ENCODE measurements at regions of chr21 and their contacts with region 1.

Region 1: DNA sequence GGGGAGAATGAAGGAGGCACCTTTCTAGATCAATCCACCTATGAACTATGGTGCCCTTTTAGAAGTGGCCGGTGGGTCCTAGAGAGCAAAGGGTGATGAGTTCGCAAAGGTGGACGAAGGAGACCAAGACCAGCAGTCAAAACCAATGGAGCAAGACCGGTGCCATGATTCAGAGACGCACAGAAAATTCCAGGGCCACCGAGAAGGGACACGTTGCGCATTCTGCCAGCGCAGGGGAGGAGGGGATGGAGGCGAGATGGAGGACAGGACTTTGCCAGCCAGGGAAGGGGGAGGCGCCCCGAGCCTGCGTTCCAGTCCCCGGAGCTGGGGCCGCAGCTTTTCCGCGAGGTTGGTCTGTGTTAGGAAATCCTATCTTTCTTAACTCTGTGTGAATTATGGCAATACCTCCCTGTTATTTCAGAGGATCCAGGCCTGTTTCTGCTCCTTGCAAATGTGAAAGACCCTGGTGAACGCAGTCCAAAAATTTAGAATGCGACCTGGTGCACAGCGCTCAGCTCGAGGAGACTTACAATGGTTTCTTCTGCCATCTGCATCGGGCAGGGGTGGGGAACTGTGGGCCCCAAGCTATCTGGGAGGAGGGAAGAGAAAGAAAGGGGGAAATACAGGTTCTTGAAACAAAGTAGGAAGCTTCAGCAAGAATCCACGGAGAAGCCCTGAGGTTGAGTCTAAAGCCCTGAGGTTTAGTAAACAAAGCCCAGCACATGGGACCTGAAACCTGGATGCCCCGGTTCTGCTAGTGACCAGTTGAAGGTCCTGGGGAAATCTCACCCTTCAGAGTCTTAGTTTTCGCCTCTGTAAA is 129.4 kb downstream of the MRPS6 start:
- DNase-seq: peak in 3 of 14 experiments; percentile 7 to 33 (median 32)
- ATAC-seq: peak; percentile 21
- H3K4me3 ChIP-seq: peak overlapping the region; percentile 54
- H3K4me3 Mint-ChIP-seq: peak overlapping the region; percentile 84
- H3K27ac ChIP-seq: no peak overlapping the region
- H3K27ac Mint-ChIP-seq: peak overlapping the region; percentile 48
- H3K4me1 ChIP-seq: peaks cover 49% of the 10 kb centered on the region
- H3K4me1 Mint-ChIP-seq: peaks cover 52% of the 10 kb centered on the region
- H3K27me3 ChIP-seq: no peaks in the 10 kb centered on the region
- H3K27me3 Mint-ChIP-seq: no peaks in the 10 kb centered on the region
- CTCF ChIP-seq: no peak

Region 2: GRCh38 chr21:34078915-34079314 is 123.8 kb before region 1 on chr21:
- CTCF ChIA-PET with region 1: interaction called, 6 read pairs
- POLR2A ChIA-PET with region 1: interaction called, 5 read pairs
- intact Hi-C with region 1: loop called (anchors 5 kb)
- DNase-seq: peak in 5 of 14 experiments; percentile 10 to 61 (median 39)
- ATAC-seq: peak; percentile 30
- H3K4me3 ChIP-seq: no peak overlapping the region
- H3K4me3 Mint-ChIP-seq: peak overlapping the region; percentile 60
- H3K27ac ChIP-seq: no peak overlapping the region
- H3K27ac Mint-ChIP-seq: peak overlapping the region; percentile 48
- H3K4me1 ChIP-seq: peaks cover 43% of the 10 kb centered on the region
- H3K4me1 Mint-ChIP-seq: peaks cover 97% of the 10 kb centered on the region
- H3K27me3 ChIP-seq: no peaks in the 10 kb centered on the region
- H3K27me3 Mint-ChIP-seq: no peaks in the 10 kb centered on the region
- CTCF ChIP-seq: no peak

Measured in CD4-positive, alpha-beta T cell (primary cell).